Mammary epithelial cell (primary cell): ENCODE measurements at regions of chr21 and their contacts with region 1.

Region 1: GRCh38 chr21:41612674-41613532 is 104.9 kb upstream of the TMPRSS2 start:
- DNase-seq: peak; percentile 93
- H3K4me3 ChIP-seq: no peak overlapping the region
- H3K27ac ChIP-seq: peak overlapping the region; percentile 61
- H3K4me1 ChIP-seq: peaks cover 46% of the 10 kb centered on the region
- H3K27me3 ChIP-seq: no peaks in the 10 kb centered on the region
- CTCF ChIP-seq: peak; percentile 50 to 74

Region 2: DNA sequence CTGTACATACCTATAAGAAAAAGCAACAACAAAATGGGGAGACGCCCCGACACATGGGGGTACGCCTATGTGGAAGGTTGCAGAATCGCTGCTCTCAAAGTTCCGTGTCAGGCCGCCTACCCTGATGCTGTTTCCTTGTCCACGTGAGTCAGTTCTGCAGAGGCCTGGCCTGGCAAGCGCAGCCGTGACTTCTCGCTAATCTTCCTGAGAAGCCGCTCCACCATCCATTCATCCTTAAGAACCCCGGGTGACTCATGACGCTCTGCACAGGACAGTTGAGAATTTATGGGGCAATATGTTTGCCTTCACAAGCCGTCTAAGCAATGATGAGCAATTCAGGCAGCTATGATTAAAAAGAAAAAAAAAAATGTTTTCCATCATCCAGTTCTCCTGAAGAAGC is 17.3 kb after region 1 on chr21:
- CTCF ChIA-PET with region 1: interaction called, 4 read pairs
- dilution Hi-C with region 1: no loop called
- in situ Hi-C with region 1: no loop called
- intact Hi-C with region 1: loop called (anchors 1 kb)
- DNase-seq: peak; percentile 99
- H3K4me3 ChIP-seq: no peak overlapping the region
- H3K27ac ChIP-seq: peak overlapping the region; percentile 78
- H3K4me1 ChIP-seq: peaks cover 49% of the 10 kb centered on the region
- H3K27me3 ChIP-seq: no peaks in the 10 kb centered on the region
- CTCF ChIP-seq: no peak

Region 3: DNA sequence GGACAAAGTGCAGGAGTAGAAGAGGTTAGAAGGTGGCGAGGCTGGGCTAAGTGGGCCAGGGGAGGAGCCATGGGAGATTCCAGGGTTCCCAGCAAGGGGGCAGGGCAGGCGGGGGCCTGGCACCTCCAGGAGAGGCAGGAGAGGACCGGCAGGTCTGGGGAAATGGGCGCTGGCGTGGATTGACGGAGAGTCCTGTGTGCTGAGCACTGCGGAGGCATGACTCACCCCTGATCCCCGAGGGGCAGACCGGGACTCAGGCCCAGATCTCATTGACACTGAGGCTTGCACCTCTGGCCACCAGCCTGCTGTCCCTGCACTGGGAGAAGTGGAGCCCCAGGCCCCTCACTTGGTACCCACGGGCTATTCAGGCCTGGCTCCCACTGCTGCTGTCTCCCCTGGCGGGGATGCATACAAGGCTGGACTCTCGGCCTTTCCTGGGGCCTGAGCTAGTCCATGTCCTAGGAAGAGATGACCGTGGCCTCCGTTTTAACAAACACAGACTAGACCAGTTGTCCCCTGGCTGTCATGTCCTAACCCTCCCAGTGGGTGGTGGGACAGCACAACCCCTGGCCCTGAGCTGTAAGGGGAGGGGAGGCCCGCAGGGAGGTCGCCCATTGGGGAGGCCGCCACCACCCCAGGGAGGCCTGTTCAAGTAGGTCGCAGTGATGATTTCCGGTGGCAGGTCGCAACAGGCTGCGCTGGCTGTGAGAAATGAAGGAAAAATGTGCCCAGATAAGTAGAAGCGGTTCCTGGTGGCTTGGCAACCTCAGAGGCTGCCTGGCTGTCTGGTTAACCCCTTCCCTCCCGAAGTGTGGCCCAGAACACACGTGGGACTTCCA is 114.3 kb after region 1 on chr21:
- CTCF ChIA-PET with region 1: no interaction called
- dilution Hi-C with region 1: loop called (anchors 5 kb)
- in situ Hi-C with region 1: no loop called
- intact Hi-C with region 1: loop called (anchors 1 kb)
- DNase-seq: peak; percentile 93
- H3K4me3 ChIP-seq: peak overlapping the region in 1 of 3 experiments; percentile 28
- H3K27ac ChIP-seq: peak overlapping the region; percentile 84
- H3K4me1 ChIP-seq: peaks cover 56% of the 10 kb centered on the region
- H3K27me3 ChIP-seq: no peaks in the 10 kb centered on the region
- CTCF ChIP-seq: no peak

Region 4: DNA sequence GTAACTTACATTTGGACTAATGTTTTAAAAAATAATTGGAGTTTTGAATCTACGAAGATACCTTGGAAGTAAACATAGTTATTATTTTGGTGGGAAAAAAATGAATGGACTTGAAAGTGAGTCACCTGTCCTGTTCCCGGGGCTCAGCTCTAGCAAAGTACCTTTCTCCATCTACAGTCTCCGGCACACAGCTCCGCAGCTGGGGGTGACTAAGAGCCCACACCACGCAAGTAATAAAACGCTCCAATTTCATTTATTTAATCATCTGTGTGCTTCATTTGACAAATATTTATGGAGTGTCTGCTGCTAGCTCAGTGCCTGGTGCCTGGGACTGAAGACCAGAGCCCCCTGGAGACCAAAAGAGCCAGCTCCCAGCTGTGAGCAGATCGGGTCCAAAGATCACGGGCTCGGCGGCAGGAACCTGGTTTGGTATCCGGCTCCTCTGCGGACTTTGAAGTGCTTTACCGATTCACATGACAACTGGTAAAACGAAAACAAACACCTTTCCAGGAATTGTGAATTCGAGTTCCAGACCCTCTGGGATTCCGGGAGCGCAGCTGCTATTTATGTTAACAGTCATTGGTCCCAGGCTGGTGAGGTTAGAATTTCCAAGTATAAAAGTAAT is 155.6 kb after region 1 on chr21:
- CTCF ChIA-PET with region 1: interaction called, 12 read pairs
- dilution Hi-C with region 1: loop called (anchors 10 kb)
- in situ Hi-C with region 1: loop called in 1 of 2 experiments (anchors 5 kb)
- intact Hi-C with region 1: loop called (anchors 1 kb)
- DNase-seq: peak; percentile 87
- H3K4me3 ChIP-seq: peak overlapping the region; percentile 87 to 94 (median 92)
- H3K27ac ChIP-seq: peak overlapping the region; percentile 95
- H3K4me1 ChIP-seq: peaks cover 28% of the 10 kb centered on the region
- H3K27me3 ChIP-seq: no peaks in the 10 kb centered on the region
- CTCF ChIP-seq: peak; percentile 24 to 47

Region 5: GRCh38 chr21:41879190-41879998 is 266.5 kb after region 1 on chr21 and contains the start of gene PRDM15:
- CTCF ChIA-PET with region 1: interaction called, 3 read pairs
- dilution Hi-C with region 1: no loop called
- in situ Hi-C with region 1: no loop called
- intact Hi-C with region 1: loop called (anchors 2 kb)
- DNase-seq: peak; percentile 62
- H3K4me3 ChIP-seq: peak within 1 kb of the TSS; percentile 66 to 85 (median 84)
- H3K27ac ChIP-seq: peak within 1 kb of the TSS; percentile 85
- H3K4me1 ChIP-seq: peaks cover 12% of the 10 kb centered on the region
- H3K27me3 ChIP-seq: no peaks in the 10 kb centered on the region
- CTCF ChIP-seq: no peak
- total RNA-seq, gene PRDM15: 7.2 to 8.1 TPM

Region 6: DNA sequence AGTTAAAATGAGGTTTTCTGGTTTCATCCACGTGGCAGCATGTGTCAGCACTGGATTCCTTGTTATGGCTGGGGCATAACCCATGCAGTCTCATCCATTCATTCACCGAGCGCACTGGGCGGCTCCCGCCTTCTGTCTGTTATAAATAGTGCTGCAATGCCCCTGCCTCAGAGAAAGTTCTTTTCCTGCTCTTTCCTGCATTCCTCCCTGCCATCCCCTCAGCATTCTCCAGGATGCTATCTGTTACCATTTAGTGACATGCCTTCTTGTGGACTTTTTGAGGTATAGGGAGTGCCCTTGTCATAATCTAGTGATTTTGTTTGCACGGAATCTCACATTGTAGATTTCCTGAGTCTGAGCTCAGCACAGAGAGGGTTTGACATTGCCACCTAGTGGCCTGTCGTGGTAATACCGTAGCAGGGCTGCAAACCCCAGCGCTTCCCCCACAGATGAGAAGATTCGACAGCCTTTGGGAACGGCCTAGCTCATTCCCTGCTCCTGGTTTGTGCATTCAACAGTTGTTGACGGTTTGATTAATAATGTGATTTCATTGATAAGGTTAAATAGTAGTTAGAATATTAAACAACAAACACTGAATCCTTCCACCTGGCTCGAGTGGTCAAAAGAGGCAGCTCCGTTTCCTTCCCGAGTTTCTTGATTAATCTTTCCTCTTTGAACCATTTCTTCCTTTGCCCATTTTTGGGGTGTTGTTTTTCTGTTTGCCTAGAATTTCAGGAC is 504.5 kb after region 1 on chr21:
- CTCF ChIA-PET with region 1: no interaction called
- dilution Hi-C with region 1: no loop called
- in situ Hi-C with region 1: loop called (anchors 10 to 25 kb)
- intact Hi-C with region 1: loop called (anchors 1 kb)
- DNase-seq: peak; percentile 48
- H3K4me3 ChIP-seq: no peak overlapping the region
- H3K27ac ChIP-seq: no peak overlapping the region
- H3K4me1 ChIP-seq: peaks cover 13% of the 10 kb centered on the region
- H3K27me3 ChIP-seq: no peaks in the 10 kb centered on the region
- CTCF ChIP-seq: peak; percentile 91 to 94